ENCODE measurements at regions of chr4 and their contacts with region 1.

Region 1: GRCh38 chr4:47914220-47914925 is at the start of gene NFXL1:
- DNase-seq: peak; percentile 95
- CTCF ChIP-seq: no peak

Region 2: DNA sequence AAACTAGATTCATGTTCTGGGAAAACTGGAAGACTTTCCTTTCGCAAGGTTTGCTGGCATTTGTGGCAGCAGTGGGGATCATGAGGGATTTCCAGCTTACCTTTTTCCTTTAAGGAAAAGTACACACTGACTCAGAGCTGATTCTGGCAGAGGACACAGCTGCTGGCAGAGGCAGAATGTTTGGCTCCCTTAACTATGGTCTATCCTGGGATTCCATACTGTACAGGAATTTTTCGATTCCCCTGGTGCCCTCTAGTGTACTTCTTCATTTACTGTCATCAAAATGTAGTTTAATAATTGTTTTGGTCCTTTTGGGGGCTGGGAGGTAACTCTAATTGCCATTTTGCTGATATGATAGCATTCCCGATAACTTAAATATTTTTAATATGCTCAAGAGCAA is 1943.3 kb before region 1 on chr4:
- CTCF ChIA-PET with region 1: no interaction called
- POLR2A ChIA-PET with region 1: interaction called, 12 read pairs
- DNase-seq: no peak
- CTCF ChIP-seq: no peak

Region 3: GRCh38 chr4:47899639-47900038 is 14.7 kb before region 1 on chr4:
- CTCF ChIA-PET with region 1: interaction called, 12 read pairs
- POLR2A ChIA-PET with region 1: interaction called, 6 read pairs
- DNase-seq: no peak
- CTCF ChIP-seq: no peak

Region 4: DNA sequence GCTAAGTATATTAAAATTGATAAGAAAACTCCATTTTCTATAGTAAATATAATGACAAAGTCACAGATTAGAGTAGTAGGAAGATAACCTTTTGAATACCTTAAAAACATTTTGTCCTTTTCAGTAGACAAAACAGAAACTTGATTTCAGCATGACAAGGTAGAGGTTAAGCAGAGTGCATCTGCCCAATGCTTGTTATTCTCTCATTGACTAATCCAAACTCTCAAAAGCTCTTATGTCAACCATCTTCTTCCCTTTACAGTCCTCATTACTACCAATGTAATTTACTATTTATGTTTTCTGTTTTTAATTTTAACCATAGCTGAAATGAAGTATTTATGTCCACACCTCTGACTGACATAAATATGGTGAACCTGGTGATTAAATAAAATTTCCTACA is 113.3 kb after region 1 on chr4:
- CTCF ChIA-PET with region 1: no interaction called
- POLR2A ChIA-PET with region 1: no interaction called
- DNase-seq: peak; percentile 47
- CTCF ChIP-seq: no peak

Measured in GM10248 (cell line).